ENCODE measurements at regions of chr5 and their contacts with region 1.

Region 1: GRCh38 chr5:172188033-172188892 is at the start of gene STK10:
- DNase-seq: peak; percentile 89 to 92 (median 92)
- H3K4me3 ChIP-seq: peak within 1 kb of the TSS; percentile 94 to 96
- H3K4me3 Mint-ChIP-seq: peak within 1 kb of the TSS; percentile 98 to 100 (median 99)
- H3K27ac ChIP-seq: peak within 1 kb of the TSS; percentile 94
- H3K27ac Mint-ChIP-seq: peak within 1 kb of the TSS; percentile 97 to 100 (median 99)
- H3K4me1 ChIP-seq: peaks cover 25% of the 10 kb centered on the region
- H3K4me1 Mint-ChIP-seq: peaks cover 8 to 46% (median 21%) of the 10 kb centered on the region in 4 donors
- H3K27me3 ChIP-seq: no peaks in the 10 kb centered on the region
- H3K27me3 Mint-ChIP-seq: no peaks in the 10 kb centered on the region
- total RNA-seq, gene STK10: 306 to 314 TPM

Region 2: GRCh38 chr5:171258737-171259415 is 929.4 kb before region 1 on chr5:
- CTCF ChIA-PET with region 1: no interaction called
- POLR2A ChIA-PET with region 1: no interaction called
- intact Hi-C with region 1: no loop called
- DNase-seq: no peak
- H3K4me3 ChIP-seq: no peak overlapping the region
- H3K4me3 Mint-ChIP-seq: no peak overlapping the region
- H3K27ac ChIP-seq: no peak overlapping the region
- H3K27ac Mint-ChIP-seq: no peak overlapping the region
- H3K4me1 ChIP-seq: no peaks in the 10 kb centered on the region
- H3K4me1 Mint-ChIP-seq: peaks cover 0 to 1% (median under 1%) of the 10 kb centered on the region in 4 donors
- H3K27me3 ChIP-seq: no peaks in the 10 kb centered on the region
- H3K27me3 Mint-ChIP-seq: peaks cover 0 to 2% of the 10 kb centered on the region in 2 donors

Region 3: DNA sequence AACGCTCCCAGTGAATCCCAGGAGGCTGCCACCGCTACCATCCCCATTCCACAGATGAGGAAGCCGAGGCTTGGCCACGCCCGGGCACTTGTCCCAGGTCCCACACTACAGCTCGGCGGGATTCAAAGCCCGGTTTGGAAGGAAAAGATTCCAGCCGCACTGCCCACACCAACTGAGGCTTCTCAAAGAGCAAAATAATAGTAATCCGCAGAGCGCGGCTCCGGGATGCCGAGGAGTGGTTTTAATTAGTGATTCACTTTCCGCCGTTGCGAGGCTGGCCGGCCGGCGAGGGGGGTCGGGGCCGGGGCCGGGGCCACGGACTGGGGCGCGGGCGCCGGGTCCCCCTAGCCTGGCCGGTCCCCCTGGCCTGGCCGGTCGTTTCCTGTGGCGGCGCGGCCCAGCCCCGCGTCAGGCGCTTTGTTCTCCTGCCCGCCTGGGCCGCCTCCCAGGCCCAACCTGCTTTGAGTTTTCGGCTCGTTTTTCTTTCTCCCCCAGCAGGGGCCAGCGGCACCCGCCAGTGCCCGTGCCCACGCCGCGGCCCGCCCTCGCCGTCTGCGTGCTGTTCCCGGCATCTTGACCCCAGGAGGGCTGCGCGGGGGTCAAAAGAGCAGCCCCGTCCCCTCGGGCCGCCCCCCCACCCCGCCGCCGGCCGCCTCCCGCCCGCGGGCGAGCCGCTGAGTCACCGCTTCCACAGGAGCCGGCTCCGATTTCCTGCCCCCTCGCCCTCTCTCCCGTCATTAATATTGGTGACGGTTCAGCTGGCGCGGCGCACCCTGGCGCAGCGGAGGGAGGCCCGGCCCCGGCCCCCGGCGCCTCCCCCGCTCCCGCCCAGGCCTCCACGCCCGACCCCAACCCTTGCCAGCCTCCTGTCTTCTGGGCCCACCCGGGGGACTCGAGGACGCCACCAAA is 737.6 kb before region 1 on chr5:
- CTCF ChIA-PET with region 1: no interaction called
- POLR2A ChIA-PET with region 1: no interaction called
- intact Hi-C with region 1: no loop called
- DNase-seq: no peak
- H3K4me3 ChIP-seq: no peak overlapping the region
- H3K4me3 Mint-ChIP-seq: peak overlapping the region in 1 of 8 donors; percentile 52
- H3K27ac ChIP-seq: no peak overlapping the region
- H3K27ac Mint-ChIP-seq: no peak overlapping the region
- H3K4me1 ChIP-seq: no peaks in the 10 kb centered on the region
- H3K4me1 Mint-ChIP-seq: peaks cover 3 to 11% (median 4%) of the 10 kb centered on the region in 4 donors
- H3K27me3 ChIP-seq: peaks cover 5% of the 10 kb centered on the region
- H3K27me3 Mint-ChIP-seq: peaks cover 28 to 43% of the 10 kb centered on the region in 2 donors

Region 4: DNA sequence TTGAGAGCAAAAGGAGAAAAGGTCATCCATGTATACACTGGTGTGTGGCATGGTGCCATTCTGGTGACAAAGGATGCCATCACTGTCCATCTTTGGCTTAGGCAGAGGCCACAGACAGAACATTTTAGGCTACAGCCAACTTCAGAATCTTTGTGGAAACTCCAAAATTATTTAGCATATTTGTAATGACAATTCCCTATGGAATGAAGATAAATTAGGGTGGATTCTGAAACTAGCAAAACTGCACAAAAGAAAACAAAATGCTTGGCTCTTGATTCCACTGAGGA is 274.3 kb before region 1 on chr5:
- CTCF ChIA-PET with region 1: interaction called, 31 read pairs
- POLR2A ChIA-PET with region 1: interaction called, 3 read pairs
- intact Hi-C with region 1: loop called (anchors 1 kb)
- DNase-seq: no peak
- H3K4me3 ChIP-seq: no peak overlapping the region
- H3K4me3 Mint-ChIP-seq: peak overlapping the region in 2 of 8 donors; percentile 10 to 41
- H3K27ac ChIP-seq: no peak overlapping the region
- H3K27ac Mint-ChIP-seq: peak overlapping the region in 5 of 7 donors; percentile 2 to 88 (median 60)
- H3K4me1 ChIP-seq: peaks cover 24% of the 10 kb centered on the region
- H3K4me1 Mint-ChIP-seq: peaks cover 34 to 57% (median 41%) of the 10 kb centered on the region in 4 donors
- H3K27me3 ChIP-seq: no peaks in the 10 kb centered on the region
- H3K27me3 Mint-ChIP-seq: no peaks in the 10 kb centered on the region

Region 5: DNA sequence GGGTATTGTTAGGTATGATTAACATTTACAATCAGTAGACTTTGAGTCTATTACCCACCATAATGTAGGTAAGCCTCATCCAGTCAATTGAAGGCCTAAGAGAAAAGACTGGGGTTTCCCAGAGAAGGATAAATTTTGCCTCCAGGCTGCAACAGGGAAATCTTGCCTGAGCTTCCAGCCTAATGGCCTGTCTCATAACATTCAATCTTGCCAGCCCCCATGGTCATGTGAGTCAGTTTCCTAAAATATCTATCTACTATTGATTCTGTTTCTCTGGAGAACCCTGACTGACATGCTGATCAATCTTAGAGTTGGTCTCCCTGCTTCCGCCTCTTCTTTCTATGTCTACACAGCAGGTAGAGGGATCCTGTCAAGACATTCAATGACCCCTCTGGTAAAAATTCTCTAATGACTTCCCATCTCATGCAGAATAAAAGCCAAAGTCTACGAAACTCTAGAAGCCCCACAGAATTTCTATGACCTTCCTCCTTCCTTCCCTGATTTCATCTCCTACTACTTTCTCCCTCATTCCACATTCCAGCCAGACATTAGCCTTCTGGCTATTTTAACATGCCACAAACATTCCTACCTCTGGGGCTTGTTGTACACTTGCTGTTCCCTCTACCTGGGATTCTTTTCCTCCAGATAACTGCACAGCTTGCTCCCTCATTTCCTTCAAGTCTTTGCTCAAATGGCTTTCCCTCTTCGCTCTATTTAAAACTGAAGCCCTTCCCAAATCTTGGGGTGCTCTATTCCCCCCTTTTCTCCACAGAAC is 242.1 kb before region 1 on chr5:
- CTCF ChIA-PET with region 1: no interaction called
- POLR2A ChIA-PET with region 1: no interaction called
- intact Hi-C with region 1: no loop called
- DNase-seq: no peak
- H3K4me3 ChIP-seq: no peak overlapping the region
- H3K4me3 Mint-ChIP-seq: peak overlapping the region in 1 of 8 donors; percentile 15
- H3K27ac ChIP-seq: no peak overlapping the region
- H3K27ac Mint-ChIP-seq: peak overlapping the region in 2 of 7 donors; percentile 2 to 61
- H3K4me1 ChIP-seq: peaks cover 12% of the 10 kb centered on the region
- H3K4me1 Mint-ChIP-seq: peaks cover 32 to 52% (median 43%) of the 10 kb centered on the region in 4 donors
- H3K27me3 ChIP-seq: no peaks in the 10 kb centered on the region
- H3K27me3 Mint-ChIP-seq: no peaks in the 10 kb centered on the region

Region 6: GRCh38 chr5:172065501-172065990 is 122.7 kb before region 1 on chr5:
- CTCF ChIA-PET with region 1: interaction called, 16 read pairs
- POLR2A ChIA-PET with region 1: interaction called, 25 read pairs
- intact Hi-C with region 1: loop called (anchors 1 kb)
- DNase-seq: no peak
- H3K4me3 ChIP-seq: no peak overlapping the region
- H3K4me3 Mint-ChIP-seq: peak overlapping the region in 5 of 8 donors; percentile 4 to 86 (median 80)
- H3K27ac ChIP-seq: peak overlapping the region; percentile 62
- H3K27ac Mint-ChIP-seq: peak overlapping the region in 5 of 7 donors; percentile 29 to 98 (median 95)
- H3K4me1 ChIP-seq: peaks cover 68% of the 10 kb centered on the region
- H3K4me1 Mint-ChIP-seq: peaks cover 46 to 79% (median 60%) of the 10 kb centered on the region in 4 donors
- H3K27me3 ChIP-seq: no peaks in the 10 kb centered on the region
- H3K27me3 Mint-ChIP-seq: no peaks in the 10 kb centered on the region

Region 7: GRCh38 chr5:172106511-172107356 is 81.5 kb before region 1 on chr5:
- CTCF ChIA-PET with region 1: interaction called, 248 read pairs
- POLR2A ChIA-PET with region 1: interaction called, 597 read pairs
- intact Hi-C with region 1: loop called (anchors 1 kb)
- DNase-seq: peak; percentile 49 to 67 (median 56)
- H3K4me3 ChIP-seq: no peak overlapping the region
- H3K4me3 Mint-ChIP-seq: peak overlapping the region in 4 of 8 donors; percentile 45 to 65 (median 52)
- H3K27ac ChIP-seq: peak overlapping the region; percentile 36
- H3K27ac Mint-ChIP-seq: peak overlapping the region; percentile 77 to 93 (median 87)
- H3K4me1 ChIP-seq: peaks cover 43% of the 10 kb centered on the region
- H3K4me1 Mint-ChIP-seq: peaks cover 21 to 65% (median 37%) of the 10 kb centered on the region in 4 donors
- H3K27me3 ChIP-seq: no peaks in the 10 kb centered on the region
- H3K27me3 Mint-ChIP-seq: no peaks in the 10 kb centered on the region

Region 8: GRCh38 chr5:172150514-172151425 is 37.5 kb before region 1 on chr5:
- CTCF ChIA-PET with region 1: interaction called, 429 read pairs
- POLR2A ChIA-PET with region 1: interaction called, 21 read pairs
- intact Hi-C with region 1: loop called (anchors 2 kb)
- DNase-seq: peak in 4 of 5 donors; percentile 14 to 37 (median 26)
- H3K4me3 ChIP-seq: peak overlapping the region in 1 of 2 donors; percentile 48
- H3K4me3 Mint-ChIP-seq: peak overlapping the region; percentile 36 to 79 (median 73)
- H3K27ac ChIP-seq: peak overlapping the region; percentile 55
- H3K27ac Mint-ChIP-seq: peak overlapping the region; percentile 89 to 97 (median 94)
- H3K4me1 ChIP-seq: peaks cover 88% of the 10 kb centered on the region
- H3K4me1 Mint-ChIP-seq: peaks cover 54 to 91% (median 74%) of the 10 kb centered on the region in 4 donors
- H3K27me3 ChIP-seq: no peaks in the 10 kb centered on the region
- H3K27me3 Mint-ChIP-seq: no peaks in the 10 kb centered on the region

Region 9: DNA sequence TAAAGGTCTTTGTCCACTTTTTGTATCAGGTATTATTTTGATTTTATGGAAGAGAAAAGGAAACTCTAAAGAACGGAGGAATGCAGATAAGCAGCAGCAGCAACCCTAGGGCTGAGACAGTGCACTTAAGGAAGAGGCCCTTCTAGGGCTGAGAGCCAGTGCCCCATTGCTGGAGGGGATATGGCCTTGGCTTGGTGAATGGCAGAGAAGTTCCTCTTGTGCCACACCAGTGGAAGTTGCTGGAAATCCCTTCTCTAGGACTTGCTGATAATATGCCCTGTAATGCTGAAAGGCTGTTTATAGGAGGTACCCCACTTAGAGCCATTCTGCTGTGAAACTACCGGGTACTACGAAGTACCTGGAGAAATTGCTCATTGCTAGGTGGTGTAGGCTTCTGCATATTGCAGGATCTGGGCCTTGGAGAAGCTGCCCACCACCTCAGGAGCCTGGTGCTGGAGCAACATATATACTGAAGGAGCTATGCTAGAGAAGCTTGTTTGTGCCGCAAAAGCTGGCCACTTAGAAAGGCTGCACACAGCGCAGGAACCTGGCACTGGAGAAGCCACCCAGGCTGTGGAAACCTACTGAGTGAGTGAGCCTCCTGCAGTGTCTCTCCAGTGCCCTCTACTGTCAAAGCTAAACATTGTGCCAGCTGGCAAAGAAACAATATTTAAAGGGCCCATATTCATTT is 104.9 kb after region 1 on chr5:
- CTCF ChIA-PET with region 1: interaction called, 18 read pairs
- POLR2A ChIA-PET with region 1: interaction called, 7 read pairs
- intact Hi-C with region 1: loop called (anchors 1 kb)
- DNase-seq: peak; percentile 64 to 73 (median 65)
- H3K4me3 ChIP-seq: no peak overlapping the region
- H3K4me3 Mint-ChIP-seq: no peak overlapping the region
- H3K27ac ChIP-seq: no peak overlapping the region
- H3K27ac Mint-ChIP-seq: peak overlapping the region in 1 of 7 donors; percentile 49
- H3K4me1 ChIP-seq: no peaks in the 10 kb centered on the region
- H3K4me1 Mint-ChIP-seq: peaks cover 0 to 4% (median 2%) of the 10 kb centered on the region in 4 donors
- H3K27me3 ChIP-seq: no peaks in the 10 kb centered on the region
- H3K27me3 Mint-ChIP-seq: peaks cover 2 to 3% of the 10 kb centered on the region in 2 donors